HEK293 (cell line): ENCODE measurements at regions of chr17 and their contacts with region 1.

Region 1: DNA sequence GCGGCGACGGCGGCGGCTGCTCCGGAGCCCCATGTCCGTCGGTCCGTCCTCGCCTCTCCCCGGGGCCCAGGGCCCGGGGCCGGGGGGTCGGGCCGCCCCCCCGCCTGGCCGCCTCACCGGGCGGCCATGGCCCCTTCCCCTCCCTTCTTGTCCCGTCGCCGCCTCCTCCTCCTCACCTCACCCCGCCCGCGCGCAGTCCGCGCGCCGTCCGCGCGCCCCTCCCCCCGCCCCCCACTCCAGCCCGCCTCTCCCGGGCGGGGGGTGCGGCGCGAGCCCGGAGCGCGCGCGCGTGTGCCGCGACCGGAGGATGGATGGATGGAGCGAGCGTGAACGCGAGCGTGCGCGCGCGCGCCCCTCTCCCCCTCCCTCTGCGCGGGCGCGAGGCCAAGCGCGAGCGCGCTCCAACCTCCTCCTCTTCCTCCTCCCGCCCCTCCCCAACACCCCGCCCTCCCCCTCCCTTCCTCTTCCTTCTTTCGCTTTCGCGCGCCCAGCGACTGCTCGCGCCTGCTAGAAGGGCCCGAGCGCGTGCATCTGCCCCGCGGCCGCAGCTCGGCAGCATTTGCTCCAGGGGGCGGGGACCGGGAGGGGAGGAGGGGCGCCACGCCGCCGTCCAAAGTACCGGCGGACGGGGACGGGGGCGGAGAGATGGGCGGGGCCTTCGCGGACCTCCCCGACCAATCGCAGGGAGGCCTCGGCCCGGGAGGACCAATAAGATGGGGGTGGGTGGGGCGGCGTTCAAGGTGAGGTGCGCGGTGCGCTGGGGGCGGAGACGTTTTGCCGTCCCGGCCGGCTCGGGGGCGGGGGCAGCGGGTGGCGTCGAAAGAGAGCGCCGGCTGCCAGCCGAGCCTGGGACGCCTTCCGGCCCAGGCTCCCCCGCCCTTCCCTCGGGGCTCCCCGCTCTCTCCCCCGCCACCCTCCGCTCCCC is at the start of gene ATXN7L3:
- H3K4me3 ChIP-seq: peak within 1 kb of the TSS; percentile 75
- H3K27ac ChIP-seq: peak within 1 kb of the TSS; percentile 88
- H3K4me1 ChIP-seq: peaks cover 5% of the 10 kb centered on the region
- CTCF ChIP-seq: no peak

Region 2: DNA sequence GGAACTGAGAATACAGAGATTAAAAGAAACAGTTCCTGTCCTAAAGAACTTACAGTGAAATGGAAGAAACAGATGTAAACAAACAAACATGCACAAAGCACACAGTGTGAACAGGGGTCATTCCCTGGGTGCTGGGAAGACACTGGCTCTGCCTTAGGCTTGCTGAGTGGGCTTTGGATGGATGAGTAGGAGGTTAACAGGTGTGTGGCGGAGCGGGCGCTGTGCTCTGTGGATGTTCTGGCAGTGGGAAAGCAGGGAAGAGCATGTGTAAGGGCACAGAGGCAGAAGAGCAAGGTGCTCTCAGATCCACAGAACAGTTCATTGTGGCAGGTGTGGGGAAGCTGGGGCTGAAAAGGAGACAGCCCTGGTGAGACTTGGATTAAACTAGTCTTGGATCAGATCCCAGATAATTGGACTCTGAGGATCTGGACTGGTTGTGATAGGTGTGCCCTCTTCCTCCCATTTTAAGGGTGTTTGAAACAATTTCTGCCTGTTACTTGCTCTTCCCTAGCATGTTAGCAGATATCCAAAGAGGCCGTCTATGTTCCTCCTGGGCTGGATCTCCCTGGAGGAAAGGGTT is 50.0 kb before region 1 on chr17:
- CTCF ChIA-PET with region 1: no interaction called
- POLR2A ChIA-PET with region 1: no interaction called
- H3K4me3 ChIP-seq: no peak overlapping the region
- H3K27ac ChIP-seq: peak overlapping the region; percentile 29
- H3K4me1 ChIP-seq: peaks cover 3% of the 10 kb centered on the region; the same call in 1 of the 2 replicates
- CTCF ChIP-seq: no peak

Region 3: GRCh38 chr17:44186307-44187130 is 13.3 kb before region 1 on chr17 and contains the start of gene TMUB2:
- CTCF ChIA-PET with region 1: interaction called, 7 read pairs
- POLR2A ChIA-PET with region 1: interaction called, 46 read pairs
- H3K4me3 ChIP-seq: peak within 1 kb of the TSS; percentile 77
- H3K27ac ChIP-seq: peak within 1 kb of the TSS; percentile 91
- H3K4me1 ChIP-seq: peaks cover 3% of the 10 kb centered on the region
- CTCF ChIP-seq: no peak

Region 4: GRCh38 chr17:44293509-44294226 is 93.9 kb after region 1 on chr17:
- CTCF ChIA-PET with region 1: no interaction called
- POLR2A ChIA-PET with region 1: no interaction called
- H3K4me3 ChIP-seq: no peak overlapping the region
- H3K27ac ChIP-seq: no peak overlapping the region
- H3K4me1 ChIP-seq: no peaks in the 10 kb centered on the region
- CTCF ChIP-seq: no peak

Region 5: DNA sequence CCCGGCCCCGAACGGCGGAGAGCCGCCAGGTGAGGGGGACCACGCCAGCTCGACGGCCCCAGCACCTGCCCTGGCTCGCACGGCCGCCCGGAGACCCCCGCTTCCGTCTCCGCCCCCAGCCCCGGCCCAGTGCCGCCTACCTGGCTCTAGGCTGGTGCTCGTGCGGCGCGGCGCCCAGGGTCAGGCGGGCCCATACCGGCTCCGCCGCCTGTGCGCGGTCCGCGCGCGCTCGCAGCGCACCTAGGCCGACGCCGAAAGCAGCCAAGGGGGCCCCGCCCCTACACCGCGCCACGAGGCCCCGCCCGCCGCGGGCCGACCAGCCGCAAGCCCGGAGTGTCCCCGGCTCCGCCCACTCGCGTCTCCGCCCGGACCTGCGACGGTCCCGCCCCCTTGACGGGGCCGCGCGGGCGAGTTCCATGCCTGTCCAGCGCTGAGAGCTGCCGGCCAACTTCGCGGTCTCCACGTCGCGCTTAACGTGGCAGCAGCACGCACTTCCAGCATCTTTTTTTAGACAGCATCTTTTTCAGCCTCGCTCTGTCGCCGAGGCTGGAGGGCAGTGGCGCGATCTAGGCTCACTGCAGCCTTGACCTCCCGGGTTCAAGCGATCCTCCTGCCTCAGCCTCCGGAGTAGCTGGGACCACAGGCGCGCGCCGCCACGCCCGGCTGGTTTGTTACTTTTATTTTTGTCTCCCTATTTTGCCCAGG is 124.9 kb after region 1 on chr17 and contains the start of gene SLC25A39:
- CTCF ChIA-PET with region 1: interaction called, 4 read pairs
- POLR2A ChIA-PET with region 1: interaction called, 11 read pairs
- H3K4me3 ChIP-seq: peak within 1 kb of the TSS; percentile 88
- H3K27ac ChIP-seq: peak within 1 kb of the TSS; percentile 56; the same call in 1 of the 2 replicates
- H3K4me1 ChIP-seq: 0 out of 2 replicates have a peak, but pooled peaks cover 3% of the 10 kb centered on the region
- CTCF ChIP-seq: no peak

Region 6: DNA sequence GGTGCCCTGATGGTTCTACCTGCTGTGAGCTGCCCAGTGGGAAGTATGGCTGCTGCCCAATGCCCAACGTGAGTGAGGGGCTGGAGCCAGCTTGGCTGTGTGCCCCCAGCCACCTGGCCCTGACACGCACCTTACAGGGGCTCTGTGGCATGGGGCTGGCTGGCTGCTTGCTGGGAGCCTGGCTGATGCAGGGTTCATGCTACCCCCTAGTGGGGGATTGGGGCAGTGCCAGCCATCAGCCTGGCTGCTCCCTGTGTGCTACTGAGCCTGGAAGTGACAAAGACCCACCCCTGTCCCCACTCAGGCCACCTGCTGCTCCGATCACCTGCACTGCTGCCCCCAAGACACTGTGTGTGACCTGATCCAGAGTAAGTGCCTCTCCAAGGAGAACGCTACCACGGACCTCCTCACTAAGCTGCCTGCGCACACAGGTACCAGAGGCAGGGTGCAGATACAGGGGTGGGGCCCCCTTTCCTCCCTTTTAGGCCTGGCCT is 151.0 kb after region 1 on chr17:
- CTCF ChIA-PET with region 1: interaction called, 17 read pairs
- POLR2A ChIA-PET with region 1: interaction called, 8 read pairs
- H3K4me3 ChIP-seq: no peak overlapping the region
- H3K27ac ChIP-seq: no peak overlapping the region
- H3K4me1 ChIP-seq: no peaks in the 10 kb centered on the region
- CTCF ChIP-seq: peak; percentile 86